ENCODE measurements at regions of chr4 and their contacts with region 1.

Region 1: GRCh38 chr4:102620697-102621497 is 119.7 kb downstream of the NFKB1 start:
- DNase-seq: peak in 1 of 4 donors; percentile 65
- ATAC-seq: peak; percentile 92
- H3K4me3 ChIP-seq: no peak overlapping the region
- H3K27ac ChIP-seq: peak overlapping the region; percentile 51 to 55
- H3K4me1 ChIP-seq: peaks cover 0 to 5% of the 10 kb centered on the region in 2 donors
- H3K27me3 ChIP-seq: no peaks in the 10 kb centered on the region
- CTCF ChIP-seq: peak; percentile 10 to 21

Region 2: GRCh38 chr4:102449751-102450352 is 171.0 kb before region 1 on chr4:
- intact Hi-C with region 1: loop called in 1 of 2 experiments (anchors 10 kb)
- DNase-seq: peak in 1 of 4 donors; percentile 70
- ATAC-seq: peak; percentile 90
- H3K4me3 ChIP-seq: no peak overlapping the region
- H3K27ac ChIP-seq: no peak overlapping the region
- H3K4me1 ChIP-seq: no peaks in the 10 kb centered on the region
- H3K27me3 ChIP-seq: no peaks in the 10 kb centered on the region
- CTCF ChIP-seq: peak; percentile 49 to 62

Region 3: GRCh38 chr4:102684610-102685052 is 63.7 kb after region 1 on chr4:
- intact Hi-C with region 1: no loop called
- DNase-seq: no peak
- ATAC-seq: no peak
- H3K4me3 ChIP-seq: no peak overlapping the region
- H3K27ac ChIP-seq: no peak overlapping the region
- H3K4me1 ChIP-seq: peaks cover 0 to 17% of the 10 kb centered on the region in 2 donors
- H3K27me3 ChIP-seq: no peaks in the 10 kb centered on the region
- CTCF ChIP-seq: no peak

Region 4: GRCh38 chr4:103008875-103009729 is 388.2 kb after region 1 on chr4:
- intact Hi-C with region 1: loop called in 1 of 2 experiments (anchors 10 kb)
- DNase-seq: peak in 2 of 4 donors; percentile 55 to 76
- ATAC-seq: peak; percentile 86
- H3K4me3 ChIP-seq: no peak overlapping the region
- H3K27ac ChIP-seq: no peak overlapping the region
- H3K4me1 ChIP-seq: no peaks in the 10 kb centered on the region
- H3K27me3 ChIP-seq: no peaks in the 10 kb centered on the region
- CTCF ChIP-seq: peak; percentile 57 to 67